Naive thymus-derived CD4-positive, alpha-beta T cell (primary cell): ENCODE measurements at regions of chr1 and their contacts with region 1.

Region 1: DNA sequence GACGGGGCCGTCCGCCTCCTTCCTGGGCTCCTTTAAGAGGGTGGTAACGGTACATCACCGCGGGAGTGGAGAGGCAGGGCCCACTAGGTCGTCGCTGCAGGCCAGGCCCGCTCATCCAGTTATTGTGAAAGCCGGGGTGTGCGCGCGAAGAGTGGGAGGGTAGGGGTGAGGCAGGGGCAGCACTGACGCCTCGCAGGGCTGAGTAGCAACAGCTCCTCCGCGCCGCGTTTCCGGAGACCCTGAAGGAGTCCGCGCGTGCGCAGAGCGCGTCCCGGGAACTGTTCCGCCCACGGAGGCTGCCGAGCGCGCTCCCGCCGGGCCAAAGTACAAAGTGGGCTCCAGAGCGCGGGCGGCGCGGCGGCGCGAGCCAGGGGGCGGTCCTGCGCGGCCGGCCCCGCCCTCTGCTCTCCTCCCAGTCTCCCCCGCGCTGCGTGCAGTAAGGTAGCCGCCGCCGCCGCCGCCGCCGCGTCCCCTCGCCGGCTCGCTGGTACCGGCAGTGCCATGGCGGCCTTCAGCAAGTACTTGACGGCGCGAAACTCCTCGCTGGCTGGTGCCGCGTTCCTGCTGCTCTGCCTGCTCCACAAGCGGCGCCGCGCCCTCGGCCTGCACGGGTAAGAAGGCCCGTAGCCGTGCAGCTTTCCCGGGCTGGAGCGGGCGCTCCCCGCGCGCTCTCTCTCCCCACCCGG is at the start of gene ABCD3:
- DNase-seq: peak; percentile 97 to 99 (median 99)
- ATAC-seq: peak; percentile 97
- H3K4me3 ChIP-seq: peak within 1 kb of the TSS; percentile 79
- H3K4me3 Mint-ChIP-seq: no peak within 1 kb of the TSS
- H3K27ac ChIP-seq: peak within 1 kb of the TSS; percentile 76
- H3K27ac Mint-ChIP-seq: peak within 1 kb of the TSS in 7 of 9 donors; percentile 68 to 91 (median 83)
- H3K4me1 ChIP-seq: peaks cover 10 to 15% of the 10 kb centered on the region in 2 donors
- H3K4me1 Mint-ChIP-seq: peaks cover 25 to 42% (median 40%) of the 10 kb centered on the region in 7 donors
- H3K27me3 ChIP-seq: no peaks in the 10 kb centered on the region
- H3K27me3 Mint-ChIP-seq: peaks cover 0 to 16% (median 0%) of the 10 kb centered on the region in 5 donors
- total RNA-seq, gene ABCD3: 18.0 to 31.2 (median 25.0) TPM

Region 2: DNA sequence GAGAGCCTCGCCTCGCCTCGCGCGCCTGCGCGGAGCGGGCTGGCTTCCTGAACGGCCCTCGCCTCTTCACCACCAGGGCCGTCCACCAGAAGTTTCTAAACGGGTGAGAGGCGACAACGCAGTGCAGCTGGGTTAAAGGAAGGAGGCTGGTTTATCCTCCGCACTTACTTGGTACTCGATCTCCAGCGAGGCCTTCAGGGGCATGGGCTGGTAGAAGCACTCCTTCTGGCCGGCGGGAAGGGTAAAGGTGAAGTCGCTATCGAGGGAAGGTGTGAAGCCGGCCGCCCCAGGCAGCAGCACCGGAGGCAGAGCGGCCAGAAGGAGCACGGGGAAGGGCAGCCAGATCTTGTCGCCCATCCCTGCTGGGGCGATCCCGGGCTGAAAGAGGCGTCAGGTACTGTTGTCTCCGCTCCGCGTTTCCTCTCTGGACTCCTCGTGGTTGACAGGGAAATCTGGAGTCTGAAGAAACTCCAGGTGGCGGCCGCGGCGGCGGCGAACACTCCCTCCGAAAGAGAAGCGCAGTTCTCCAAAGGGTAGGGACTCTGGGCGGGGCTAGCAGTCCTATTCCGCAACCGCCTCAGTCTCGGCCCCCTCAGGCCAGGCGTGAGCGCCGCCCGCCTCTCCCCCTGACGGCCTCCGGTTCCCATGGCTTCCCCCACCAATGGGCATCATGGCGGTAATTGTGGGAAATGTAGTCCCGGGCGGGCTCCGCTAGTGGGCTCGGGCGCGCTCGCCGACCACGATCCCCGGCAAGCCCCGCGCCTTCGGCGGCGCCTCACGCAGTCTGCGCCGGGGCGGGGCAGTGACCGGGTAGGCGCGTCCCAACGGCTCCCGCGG is 1238.0 kb before region 1 on chr1 and contains the start of gene TMED5:
- CTCF ChIA-PET with region 1: no interaction called
- POLR2A ChIA-PET with region 1: no interaction called
- intact Hi-C with region 1: loop called (anchors 1 to 2 kb)
- DNase-seq: peak; percentile 94 to 97 (median 96)
- ATAC-seq: peak; percentile 89
- H3K4me3 ChIP-seq: peak within 1 kb of the TSS; percentile 95
- H3K4me3 Mint-ChIP-seq: peak within 1 kb of the TSS; percentile 91 to 98 (median 94)
- H3K27ac ChIP-seq: peak within 1 kb of the TSS; percentile 91
- H3K27ac Mint-ChIP-seq: peak within 1 kb of the TSS; percentile 86 to 99 (median 97)
- H3K4me1 ChIP-seq: peaks cover 24 to 30% of the 10 kb centered on the region in 2 donors
- H3K4me1 Mint-ChIP-seq: peaks cover 30 to 59% (median 47%) of the 10 kb centered on the region in 7 donors
- H3K27me3 ChIP-seq: no peaks in the 10 kb centered on the region
- H3K27me3 Mint-ChIP-seq: no peaks in the 10 kb centered on the region
- total RNA-seq, gene TMED5: 37.8 to 60.0 (median 47.4) TPM

Region 3: GRCh38 chr1:93909146-93910050 is 508.7 kb before region 1 on chr1 and contains the start of gene GCLM:
- CTCF ChIA-PET with region 1: no interaction called
- POLR2A ChIA-PET with region 1: no interaction called
- intact Hi-C with region 1: loop called (anchors 1 kb)
- DNase-seq: peak; percentile 81 to 97 (median 88)
- ATAC-seq: peak; percentile 98
- H3K4me3 ChIP-seq: peak within 1 kb of the TSS; percentile 61
- H3K4me3 Mint-ChIP-seq: peak within 1 kb of the TSS; percentile 86 to 99 (median 90)
- H3K27ac ChIP-seq: peak within 1 kb of the TSS; percentile 73
- H3K27ac Mint-ChIP-seq: peak within 1 kb of the TSS; percentile 60 to 94 (median 90)
- H3K4me1 ChIP-seq: peaks cover 9 to 13% of the 10 kb centered on the region in 2 donors
- H3K4me1 Mint-ChIP-seq: peaks cover 19 to 38% (median 33%) of the 10 kb centered on the region in 7 donors
- H3K27me3 ChIP-seq: no peaks in the 10 kb centered on the region
- H3K27me3 Mint-ChIP-seq: peaks cover 0 to 30% (median 0%) of the 10 kb centered on the region in 5 donors
- total RNA-seq, gene GCLM: 6.4 to 23.8 (median 11.5) TPM

Region 4: GRCh38 chr1:94237291-94238226 is 180.6 kb before region 1 on chr1 and contains the start of gene ARHGAP29:
- CTCF ChIA-PET with region 1: no interaction called
- POLR2A ChIA-PET with region 1: no interaction called
- intact Hi-C with region 1: loop called (anchors 2 to 5 kb)
- DNase-seq: peak; percentile 6 to 63 (median 26)
- ATAC-seq: peak; percentile 83
- H3K4me3 ChIP-seq: peak within 1 kb of the TSS; percentile 22
- H3K4me3 Mint-ChIP-seq: peak within 1 kb of the TSS; percentile 50 to 85 (median 74)
- H3K27ac ChIP-seq: no peak within 1 kb of the TSS
- H3K27ac Mint-ChIP-seq: peak within 1 kb of the TSS in 1 of 9 donors; percentile 62
- H3K4me1 ChIP-seq: peaks cover 0 to 7% of the 10 kb centered on the region in 2 donors
- H3K4me1 Mint-ChIP-seq: peaks cover 8 to 17% (median 13%) of the 10 kb centered on the region in 7 donors
- H3K27me3 ChIP-seq: peaks cover 0 to 13% of the 10 kb centered on the region in 2 donors
- H3K27me3 Mint-ChIP-seq: peaks cover 77 to 82% (median 81%) of the 10 kb centered on the region in 5 donors
- total RNA-seq, gene ARHGAP29: 0.02 to 0.37 TPM in 2 of 5 experiments, not detected in the others

Region 5: GRCh38 chr1:94463765-94464330 is 45.7 kb after region 1 on chr1:
- CTCF ChIA-PET with region 1: no interaction called
- POLR2A ChIA-PET with region 1: no interaction called
- intact Hi-C with region 1: loop called in 1 of 2 experiments (anchors 2 kb)
- DNase-seq: peak in 7 of 9 donors; percentile 20 to 56 (median 45)
- ATAC-seq: peak; percentile 64
- H3K4me3 ChIP-seq: no peak overlapping the region
- H3K4me3 Mint-ChIP-seq: no peak overlapping the region
- H3K27ac ChIP-seq: no peak overlapping the region
- H3K27ac Mint-ChIP-seq: peak overlapping the region in 1 of 9 donors; percentile 47
- H3K4me1 ChIP-seq: no peaks in the 10 kb centered on the region
- H3K4me1 Mint-ChIP-seq: peaks cover 0 to 14% (median 9%) of the 10 kb centered on the region in 7 donors
- H3K27me3 ChIP-seq: no peaks in the 10 kb centered on the region
- H3K27me3 Mint-ChIP-seq: no peaks in the 10 kb centered on the region

Region 6: GRCh38 chr1:94599095-94599813 is 181.1 kb after region 1 on chr1:
- CTCF ChIA-PET with region 1: no interaction called
- POLR2A ChIA-PET with region 1: no interaction called
- intact Hi-C with region 1: no loop called
- DNase-seq: no peak
- ATAC-seq: no peak
- H3K4me3 ChIP-seq: no peak overlapping the region
- H3K4me3 Mint-ChIP-seq: no peak overlapping the region
- H3K27ac ChIP-seq: no peak overlapping the region
- H3K27ac Mint-ChIP-seq: no peak overlapping the region
- H3K4me1 ChIP-seq: no peaks in the 10 kb centered on the region
- H3K4me1 Mint-ChIP-seq: peaks cover 0 to 22% (median 7%) of the 10 kb centered on the region in 7 donors
- H3K27me3 ChIP-seq: no peaks in the 10 kb centered on the region
- H3K27me3 Mint-ChIP-seq: peaks cover 26 to 51% (median 37%) of the 10 kb centered on the region in 5 donors

Region 7: DNA sequence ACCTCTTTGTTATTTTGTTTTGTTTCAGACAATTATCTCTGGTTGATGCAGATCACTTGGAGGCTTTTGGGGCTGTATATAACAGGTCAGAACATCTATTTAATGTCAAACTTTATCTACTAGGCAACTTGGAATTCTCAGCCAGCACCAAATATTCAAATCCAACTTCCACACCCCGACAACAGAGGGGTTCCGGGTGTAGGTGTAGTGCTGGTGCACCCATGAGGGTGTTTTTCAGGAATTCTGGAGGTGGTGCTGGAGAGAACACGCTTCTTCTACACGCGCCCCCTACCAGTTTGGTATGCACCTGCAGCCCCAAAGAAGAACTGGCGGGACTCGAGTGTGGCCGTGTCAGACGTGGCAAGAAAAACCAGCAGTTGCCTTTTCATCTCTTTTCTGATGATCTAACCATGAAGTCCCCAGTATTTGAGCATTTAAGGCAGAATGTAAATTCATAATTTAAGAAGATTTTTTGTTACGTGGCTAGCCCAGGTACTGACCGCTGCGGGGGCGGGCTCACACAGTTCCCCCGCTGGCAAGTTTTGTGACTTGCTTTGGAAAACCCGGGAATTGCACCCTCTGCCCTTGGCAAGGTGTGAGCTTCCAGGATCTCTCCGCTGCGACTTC is 698.6 kb after region 1 on chr1:
- CTCF ChIA-PET with region 1: no interaction called
- POLR2A ChIA-PET with region 1: no interaction called
- intact Hi-C with region 1: loop called in 1 of 2 experiments (anchors 2 kb)
- DNase-seq: peak; percentile 8 to 53 (median 44)
- ATAC-seq: peak; percentile 77
- H3K4me3 ChIP-seq: peak overlapping the region; percentile 57
- H3K4me3 Mint-ChIP-seq: peak overlapping the region; percentile 73 to 97 (median 91)
- H3K27ac ChIP-seq: no peak overlapping the region
- H3K27ac Mint-ChIP-seq: peak overlapping the region in 3 of 9 donors; percentile 5 to 86 (median 33)
- H3K4me1 ChIP-seq: peaks cover 4% of the 10 kb centered on the region in 2 donors
- H3K4me1 Mint-ChIP-seq: peaks cover 0 to 14% (median 9%) of the 10 kb centered on the region in 7 donors
- H3K27me3 ChIP-seq: peaks cover 0 to 3% of the 10 kb centered on the region in 2 donors
- H3K27me3 Mint-ChIP-seq: peaks cover 21 to 67% (median 52%) of the 10 kb centered on the region in 5 donors